HepG2 (cell line): ENCODE measurements at regions of chr10 and their contacts with region 1.

Region 1: DNA sequence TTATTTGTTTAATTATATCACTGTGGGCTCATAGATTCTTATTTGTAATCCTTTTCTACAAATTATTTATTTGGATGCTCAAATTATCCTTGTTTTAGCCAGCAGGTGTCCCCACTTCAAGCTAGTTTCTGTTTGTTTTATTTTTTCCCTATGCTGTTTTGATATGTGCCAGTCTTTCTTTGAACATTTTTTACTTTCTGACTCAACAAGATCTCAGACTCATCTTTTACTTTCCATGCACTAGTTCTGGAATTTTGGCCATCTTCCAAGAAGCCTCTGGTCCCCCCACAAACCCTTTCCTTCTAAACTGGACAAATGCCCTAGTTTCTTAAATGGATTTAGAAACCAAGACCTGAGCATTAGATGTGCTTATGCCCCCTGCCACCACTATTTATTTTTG is 11.5 kb upstream of the MRPS16 start:
- DNase-seq: peak; percentile 17
- ATAC-seq: no peak
- H3K4me3 ChIP-seq: no peak overlapping the region
- H3K27ac ChIP-seq: no peak overlapping the region
- H3K4me1 ChIP-seq: no peaks in the 10 kb centered on the region
- H3K27me3 ChIP-seq: no peaks in the 10 kb centered on the region
- CTCF ChIP-seq: peak; percentile 42
- EP300 ChIP-seq: no peak
- POLR2A ChIP-seq: no peak
- RAD21 ChIP-seq: no peak

Region 2: DNA sequence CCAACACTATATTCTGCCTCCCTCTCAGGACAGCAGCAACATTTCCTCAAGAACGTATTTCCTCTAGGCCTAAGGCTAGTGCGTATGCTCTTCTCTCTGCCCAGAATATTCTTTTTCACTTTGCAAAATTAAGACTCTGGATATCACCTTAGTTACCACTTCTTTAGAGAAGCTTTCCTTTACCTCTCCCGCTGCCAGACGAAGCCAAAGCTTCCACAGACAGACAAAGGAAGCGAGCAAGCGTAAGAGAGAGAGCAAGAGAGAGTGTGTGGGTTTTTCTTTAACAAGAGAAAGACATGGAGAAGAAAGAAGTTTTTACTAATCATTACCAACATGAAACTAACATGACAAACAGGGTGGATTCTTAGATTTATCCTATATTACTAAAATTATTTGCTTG is 231.4 kb before region 1 on chr10:
- CTCF ChIA-PET with region 1: no interaction called
- POLR2A ChIA-PET with region 1: no interaction called
- in situ Hi-C with region 1: no loop called
- intact Hi-C with region 1: no loop called
- DNase-seq: no peak
- ATAC-seq: no peak
- H3K4me3 ChIP-seq: no peak overlapping the region
- H3K27ac ChIP-seq: no peak overlapping the region
- H3K4me1 ChIP-seq: no peaks in the 10 kb centered on the region
- H3K27me3 ChIP-seq: no peaks in the 10 kb centered on the region
- CTCF ChIP-seq: no peak
- EP300 ChIP-seq: no peak
- POLR2A ChIP-seq: no peak
- RAD21 ChIP-seq: no peak

Region 3: DNA sequence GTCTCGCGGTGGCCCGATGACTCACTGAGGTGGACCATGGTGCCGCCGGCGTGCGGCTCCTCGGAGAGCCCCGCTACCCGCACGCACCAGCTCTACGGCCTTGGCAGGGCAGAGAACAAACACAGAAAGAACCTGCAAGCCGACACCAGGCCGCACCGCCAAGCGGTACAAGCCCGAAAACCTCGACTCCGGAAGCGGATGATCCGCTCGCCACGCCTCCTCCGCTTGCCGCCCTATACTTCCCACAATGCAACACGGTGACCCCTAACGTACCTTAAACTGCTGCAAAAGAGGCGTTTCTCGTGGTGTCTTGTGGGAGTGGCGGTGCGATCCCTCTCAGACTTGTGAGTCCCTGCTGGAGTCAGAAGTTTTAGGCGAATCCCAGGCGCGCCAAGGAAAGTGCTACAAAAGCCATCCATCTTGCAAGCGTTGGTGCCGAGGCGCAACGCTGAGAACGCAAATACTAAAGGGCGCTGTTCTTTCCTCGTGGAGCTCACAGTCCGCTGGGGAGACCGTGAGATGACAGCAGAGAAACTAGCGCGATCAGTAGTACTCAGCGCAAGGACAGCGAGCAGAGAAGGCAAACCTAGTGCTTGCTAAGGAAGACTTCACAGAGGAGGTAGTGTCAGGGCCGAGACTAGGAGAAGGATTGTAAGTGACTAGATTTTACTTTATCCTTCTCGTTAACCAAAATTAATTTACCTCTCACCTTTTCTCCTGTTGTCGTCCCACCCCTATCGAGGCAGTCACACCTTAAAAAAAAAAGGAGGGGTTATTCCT is 11.3 kb before region 1 on chr10 and contains the start of gene MRPS16:
- CTCF ChIA-PET with region 1: no interaction called
- POLR2A ChIA-PET with region 1: interaction called, 21 read pairs
- in situ Hi-C with region 1: no loop called
- intact Hi-C with region 1: no loop called
- DNase-seq: peak; percentile 95
- ATAC-seq: peak; percentile 87
- H3K4me3 ChIP-seq: peak within 1 kb of the TSS; percentile 78 to 92 (median 84)
- H3K27ac ChIP-seq: peak within 1 kb of the TSS; percentile 88
- H3K4me1 ChIP-seq: peaks cover 33% of the 10 kb centered on the region
- H3K27me3 ChIP-seq: no peaks in the 10 kb centered on the region; a peak in 1 of 5 replicates
- CTCF ChIP-seq: no peak
- EP300 ChIP-seq: peak in 1 of 2 experiments; percentile 46; a peak in 2 of 4 replicates
- POLR2A ChIP-seq: peak; percentile 74 to 90
- RAD21 ChIP-seq: peak; percentile 40; the same call in 1 of the 2 replicates
- total RNA-seq, gene MRPS16: 135 and 189 TPM in 2 replicates

Region 4: GRCh38 chr10:73358331-73359279 is 94.7 kb after region 1 on chr10 and contains the start of gene CFAP70:
- CTCF ChIA-PET with region 1: no interaction called
- POLR2A ChIA-PET with region 1: interaction called, 3 read pairs
- in situ Hi-C with region 1: no loop called
- intact Hi-C with region 1: loop called (anchors 5 kb)
- DNase-seq: peak; percentile 95
- ATAC-seq: peak; percentile 93
- H3K4me3 ChIP-seq: peak within 1 kb of the TSS; percentile 61 to 88 (median 76)
- H3K27ac ChIP-seq: peak within 1 kb of the TSS; percentile 77
- H3K4me1 ChIP-seq: peaks cover 9% of the 10 kb centered on the region
- H3K27me3 ChIP-seq: no peaks in the 10 kb centered on the region
- CTCF ChIP-seq: no peak
- EP300 ChIP-seq: no peak
- POLR2A ChIP-seq: peak; percentile 66 to 74
- RAD21 ChIP-seq: no peak
- total RNA-seq, gene CFAP70: 0.13 and 0.27 TPM in 2 replicates